ENCODE measurements at regions of chr19 and their contacts with region 1.

Region 1: GRCh38 chr19:14405758-14406644 is 13.1 kb downstream of the DDX39A start:
- DNase-seq: peak; percentile 93
- ATAC-seq: peak; percentile 89
- H3K4me3 ChIP-seq: peak overlapping the region in 3 of 5 experiments; percentile 11 to 36 (median 11)
- H3K4me3 Mint-ChIP-seq: peak overlapping the region; percentile 59
- H3K27ac ChIP-seq: peak overlapping the region in 1 of 2 donors; percentile 11
- H3K27ac Mint-ChIP-seq: peak overlapping the region; percentile 88
- H3K4me1 ChIP-seq: peaks cover 7 to 34% of the 10 kb centered on the region in 2 donors
- H3K4me1 Mint-ChIP-seq: peaks cover 41% of the 10 kb centered on the region
- H3K27me3 ChIP-seq: no peaks in the 10 kb centered on the region
- H3K27me3 Mint-ChIP-seq: no peaks in the 10 kb centered on the region
- CTCF ChIP-seq: peak; percentile 87

Region 2: DNA sequence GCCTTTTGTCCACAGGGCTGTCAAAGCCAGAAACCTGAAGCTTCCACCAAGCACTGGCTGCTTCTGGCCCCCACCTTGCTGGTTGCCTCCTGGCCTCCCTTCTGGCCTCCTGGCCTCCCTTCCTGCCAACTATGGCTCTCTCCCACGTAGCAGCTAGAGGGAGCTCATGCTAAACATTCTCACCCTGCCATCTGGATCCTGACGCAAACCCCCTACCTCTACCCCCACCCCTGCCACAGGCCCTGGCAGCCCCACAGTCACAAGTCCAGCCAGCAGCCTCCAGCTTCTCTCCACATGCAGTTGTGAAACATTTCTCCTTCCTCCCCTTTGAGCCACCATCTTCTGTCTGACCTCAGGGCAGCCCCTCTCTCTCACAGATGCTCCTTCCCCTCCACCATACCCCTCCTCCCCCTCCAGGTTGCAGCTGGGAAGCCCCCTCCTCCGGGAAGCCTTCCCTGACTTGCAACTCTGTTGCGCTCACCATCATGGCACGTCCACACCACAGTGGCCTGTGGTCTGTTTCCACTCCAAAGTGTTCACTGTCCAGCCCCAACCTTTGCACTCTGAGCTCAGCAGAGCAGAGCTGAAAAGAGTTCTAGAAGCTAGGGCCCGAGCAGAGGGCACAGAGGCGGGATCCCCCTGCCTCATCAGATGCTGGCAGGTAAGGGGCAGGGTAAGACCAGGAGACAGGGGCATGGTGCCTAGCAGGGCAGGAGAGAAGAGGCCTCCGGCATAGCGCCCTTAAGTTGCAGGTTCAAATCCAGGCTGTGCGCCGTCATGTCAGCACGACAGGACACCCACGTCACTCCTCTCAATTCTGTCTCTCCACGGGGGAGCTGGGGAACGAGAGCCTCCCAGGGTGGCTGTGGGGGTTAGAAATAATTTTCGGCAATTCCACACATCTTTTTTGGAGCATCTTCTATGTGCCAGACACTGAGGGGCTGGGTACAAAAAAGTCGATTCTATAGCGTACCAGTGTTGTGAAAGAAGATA is 207.3 kb before region 1 on chr19:
- CTCF ChIA-PET with region 1: interaction called, 22 read pairs
- POLR2A ChIA-PET with region 1: no interaction called
- intact Hi-C with region 1: loop called (anchors 1 kb)
- DNase-seq: no peak
- ATAC-seq: no peak
- H3K4me3 ChIP-seq: no peak overlapping the region
- H3K4me3 Mint-ChIP-seq: no peak overlapping the region
- H3K27ac ChIP-seq: no peak overlapping the region
- H3K27ac Mint-ChIP-seq: no peak overlapping the region
- H3K4me1 ChIP-seq: peaks cover 0 to 3% of the 10 kb centered on the region in 2 donors
- H3K4me1 Mint-ChIP-seq: peaks cover 8% of the 10 kb centered on the region
- H3K27me3 ChIP-seq: peaks cover 0 to 6% (median 0%) of the 10 kb centered on the region in 4 experiments
- H3K27me3 Mint-ChIP-seq: peaks cover 17% of the 10 kb centered on the region
- CTCF ChIP-seq: no peak

Region 3: GRCh38 chr19:14318873-14319272 is 87.1 kb before region 1 on chr19:
- CTCF ChIA-PET with region 1: no interaction called
- POLR2A ChIA-PET with region 1: no interaction called
- intact Hi-C with region 1: no loop called
- DNase-seq: no peak
- ATAC-seq: no peak
- H3K4me3 ChIP-seq: no peak overlapping the region
- H3K4me3 Mint-ChIP-seq: no peak overlapping the region
- H3K27ac ChIP-seq: no peak overlapping the region
- H3K27ac Mint-ChIP-seq: no peak overlapping the region
- H3K4me1 ChIP-seq: no peaks in the 10 kb centered on the region
- H3K4me1 Mint-ChIP-seq: no peaks in the 10 kb centered on the region
- H3K27me3 ChIP-seq: no peaks in the 10 kb centered on the region
- H3K27me3 Mint-ChIP-seq: no peaks in the 10 kb centered on the region
- CTCF ChIP-seq: no peak

Region 4: GRCh38 chr19:14354445-14354844 is 51.6 kb before region 1 on chr19:
- CTCF ChIA-PET with region 1: interaction called, 213 read pairs
- POLR2A ChIA-PET with region 1: interaction called, 4 read pairs
- intact Hi-C with region 1: no loop called
- DNase-seq: no peak
- ATAC-seq: no peak
- H3K4me3 ChIP-seq: no peak overlapping the region
- H3K4me3 Mint-ChIP-seq: no peak overlapping the region
- H3K27ac ChIP-seq: no peak overlapping the region
- H3K27ac Mint-ChIP-seq: no peak overlapping the region
- H3K4me1 ChIP-seq: peaks cover 29 to 43% of the 10 kb centered on the region in 2 donors
- H3K4me1 Mint-ChIP-seq: peaks cover 24% of the 10 kb centered on the region
- H3K27me3 ChIP-seq: no peaks in the 10 kb centered on the region
- H3K27me3 Mint-ChIP-seq: no peaks in the 10 kb centered on the region
- CTCF ChIP-seq: no peak

Region 5: DNA sequence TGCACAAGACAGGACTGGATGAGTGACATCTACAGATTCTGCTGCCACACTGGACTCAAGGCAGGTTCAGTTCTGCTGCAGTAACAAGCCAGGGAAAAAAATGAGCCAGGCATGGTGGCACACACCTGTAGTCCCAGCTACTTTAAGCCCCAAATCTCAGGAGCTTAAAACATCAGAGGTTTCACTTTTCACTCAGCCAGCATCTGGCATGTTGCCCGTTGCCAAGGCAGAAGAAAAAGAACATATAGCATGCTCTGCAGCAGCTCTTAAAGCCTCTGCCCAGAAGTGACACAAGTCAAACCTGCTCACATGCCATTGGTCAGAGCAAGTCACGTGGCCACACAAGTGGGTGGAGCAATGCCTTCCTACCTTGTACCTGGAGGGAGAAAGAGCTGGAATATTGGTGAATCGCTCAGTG is 39.5 kb before region 1 on chr19:
- CTCF ChIA-PET with region 1: interaction called, 213 read pairs
- POLR2A ChIA-PET with region 1: interaction called, 13 read pairs
- intact Hi-C with region 1: loop called (anchors 1 kb)
- DNase-seq: peak; percentile 91
- ATAC-seq: peak; percentile 47
- H3K4me3 ChIP-seq: no peak overlapping the region
- H3K4me3 Mint-ChIP-seq: peak overlapping the region; percentile 40
- H3K27ac ChIP-seq: peak overlapping the region; percentile 63 to 100
- H3K27ac Mint-ChIP-seq: peak overlapping the region; percentile 87
- H3K4me1 ChIP-seq: peaks cover 67 to 80% of the 10 kb centered on the region in 2 donors
- H3K4me1 Mint-ChIP-seq: peaks cover 61% of the 10 kb centered on the region
- H3K27me3 ChIP-seq: no peaks in the 10 kb centered on the region
- H3K27me3 Mint-ChIP-seq: no peaks in the 10 kb centered on the region
- CTCF ChIP-seq: no peak

Region 6: DNA sequence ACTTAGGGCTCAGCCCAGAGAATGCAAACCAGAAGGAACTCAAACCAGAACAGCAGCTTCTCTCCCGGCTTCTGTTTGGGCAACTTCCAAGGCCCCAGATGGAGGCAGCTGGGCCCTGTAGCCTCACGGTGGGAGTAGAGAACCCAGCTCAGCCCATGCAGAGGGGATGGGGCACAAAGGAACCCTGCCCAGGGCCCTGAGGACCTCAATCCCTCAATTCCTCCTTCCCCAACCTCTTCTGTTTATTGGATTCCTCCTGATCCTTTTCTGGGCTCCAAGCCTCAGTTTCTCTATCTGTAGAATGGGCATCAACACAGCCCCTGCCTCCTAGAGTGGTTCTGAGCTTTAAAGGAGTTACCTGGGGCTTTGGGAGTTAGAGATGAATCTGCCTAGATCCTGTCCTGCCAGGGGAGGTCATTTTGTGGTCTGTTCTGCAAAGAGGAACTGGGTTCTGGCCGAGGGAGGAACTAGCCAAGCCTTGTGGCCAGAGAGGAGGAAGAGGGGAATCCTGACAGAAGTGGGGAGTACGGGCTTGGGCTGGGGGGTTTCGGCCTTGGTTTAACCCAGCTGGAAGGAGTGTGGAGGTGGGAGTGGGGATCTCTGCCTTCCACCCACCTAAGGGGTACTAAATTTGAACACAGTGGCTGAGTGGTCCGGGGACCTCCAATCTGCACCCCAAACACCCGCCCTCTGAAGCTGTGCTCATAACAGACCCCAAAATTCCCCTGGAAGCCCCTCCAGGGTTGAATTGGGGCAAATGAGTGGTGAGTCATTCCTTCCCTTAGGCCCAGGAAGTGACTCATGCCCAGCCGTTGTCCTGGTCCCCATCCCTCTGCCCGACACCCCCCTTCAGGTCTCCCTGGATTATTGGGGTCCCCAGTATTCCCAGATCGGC is 22.1 kb before region 1 on chr19:
- CTCF ChIA-PET with region 1: interaction called, 29 read pairs
- POLR2A ChIA-PET with region 1: interaction called, 17 read pairs
- intact Hi-C with region 1: loop called (anchors 2 kb)
- DNase-seq: peak; percentile 68
- ATAC-seq: peak; percentile 12
- H3K4me3 ChIP-seq: peak overlapping the region; percentile 19 to 90 (median 39)
- H3K4me3 Mint-ChIP-seq: peak overlapping the region; percentile 85
- H3K27ac ChIP-seq: peak overlapping the region; percentile 97 to 99
- H3K27ac Mint-ChIP-seq: peak overlapping the region; percentile 89
- H3K4me1 ChIP-seq: peaks cover 48 to 70% of the 10 kb centered on the region in 2 donors
- H3K4me1 Mint-ChIP-seq: peaks cover 51% of the 10 kb centered on the region
- H3K27me3 ChIP-seq: no peaks in the 10 kb centered on the region
- H3K27me3 Mint-ChIP-seq: no peaks in the 10 kb centered on the region
- CTCF ChIP-seq: no peak

Region 7: GRCh38 chr19:14432791-14433553 is 27.0 kb after region 1 on chr19 and contains the start of gene PKN1:
- CTCF ChIA-PET with region 1: interaction called, 10 read pairs
- POLR2A ChIA-PET with region 1: no interaction called
- intact Hi-C with region 1: loop called (anchors 1 kb)
- DNase-seq: peak; percentile 73
- ATAC-seq: peak; percentile 66
- H3K4me3 ChIP-seq: peak within 1 kb of the TSS; percentile 14 to 81 (median 77)
- H3K4me3 Mint-ChIP-seq: peak within 1 kb of the TSS; percentile 89
- H3K27ac ChIP-seq: peak within 1 kb of the TSS; percentile 76 to 86
- H3K27ac Mint-ChIP-seq: peak within 1 kb of the TSS; percentile 90
- H3K4me1 ChIP-seq: peaks cover 20 to 28% of the 10 kb centered on the region in 2 donors
- H3K4me1 Mint-ChIP-seq: peaks cover 31% of the 10 kb centered on the region
- H3K27me3 ChIP-seq: peaks cover 0 to 3% (median 0%) of the 10 kb centered on the region in 4 experiments
- H3K27me3 Mint-ChIP-seq: no peaks in the 10 kb centered on the region
- CTCF ChIP-seq: no peak
- total RNA-seq, gene PKN1: 170 and 171 TPM in 2 replicates

Measured in B cell (primary cell).